ENCODE measurements at regions of chr13 and their contacts with region 1.

Region 1: GRCh38 chr13:24683838-24684599 is 3.8 kb downstream of the ATP12A start:
- H3K4me3 Mint-ChIP-seq: no peak overlapping the region
- H3K27ac Mint-ChIP-seq: no peak overlapping the region
- H3K4me1 Mint-ChIP-seq: peaks cover 10% of the 10 kb centered on the region
- H3K27me3 Mint-ChIP-seq: peaks cover 46% of the 10 kb centered on the region

Region 2: DNA sequence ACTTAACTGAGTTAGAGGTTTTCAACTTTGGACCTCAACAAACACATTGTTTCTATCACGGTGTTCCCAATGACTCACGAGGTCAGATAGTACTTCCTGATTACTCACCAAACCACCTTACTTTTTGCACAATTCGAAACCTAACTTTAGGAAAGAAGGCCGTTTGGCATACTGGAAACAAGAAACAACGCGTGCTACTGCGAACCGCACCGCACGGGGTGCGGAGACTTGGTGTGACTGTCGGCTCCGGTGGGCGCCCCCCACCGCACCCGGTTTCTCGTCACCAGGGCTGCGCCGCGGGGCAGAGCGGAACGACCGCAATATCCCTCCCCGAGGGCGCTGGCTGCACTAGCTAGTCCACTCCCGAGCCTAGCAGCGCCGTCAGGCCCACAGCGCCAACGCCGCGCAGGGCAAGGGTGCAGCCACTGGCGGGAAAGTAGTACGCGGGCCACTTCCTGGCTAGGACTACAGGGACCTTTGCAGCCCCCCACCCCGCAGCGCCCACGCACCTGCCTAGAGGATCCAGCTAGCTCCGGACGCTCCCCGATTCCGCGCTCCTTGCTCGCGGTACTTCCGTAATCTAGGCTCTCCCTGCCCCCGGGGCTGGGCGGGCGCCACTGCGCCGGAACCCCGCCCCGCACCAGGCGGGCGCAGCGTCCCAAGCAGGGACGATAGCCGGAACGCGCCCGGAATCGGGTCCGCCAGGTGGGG is 171.7 kb before region 1 on chr13 and contains the start of gene PARP4:
- intact Hi-C with region 1: loop called (anchors 5 kb)
- H3K4me3 Mint-ChIP-seq: peak within 1 kb of the TSS; percentile 92
- H3K27ac Mint-ChIP-seq: peak within 1 kb of the TSS; percentile 99
- H3K4me1 Mint-ChIP-seq: peaks cover 30% of the 10 kb centered on the region
- H3K27me3 Mint-ChIP-seq: peaks cover 4% of the 10 kb centered on the region

Region 3: DNA sequence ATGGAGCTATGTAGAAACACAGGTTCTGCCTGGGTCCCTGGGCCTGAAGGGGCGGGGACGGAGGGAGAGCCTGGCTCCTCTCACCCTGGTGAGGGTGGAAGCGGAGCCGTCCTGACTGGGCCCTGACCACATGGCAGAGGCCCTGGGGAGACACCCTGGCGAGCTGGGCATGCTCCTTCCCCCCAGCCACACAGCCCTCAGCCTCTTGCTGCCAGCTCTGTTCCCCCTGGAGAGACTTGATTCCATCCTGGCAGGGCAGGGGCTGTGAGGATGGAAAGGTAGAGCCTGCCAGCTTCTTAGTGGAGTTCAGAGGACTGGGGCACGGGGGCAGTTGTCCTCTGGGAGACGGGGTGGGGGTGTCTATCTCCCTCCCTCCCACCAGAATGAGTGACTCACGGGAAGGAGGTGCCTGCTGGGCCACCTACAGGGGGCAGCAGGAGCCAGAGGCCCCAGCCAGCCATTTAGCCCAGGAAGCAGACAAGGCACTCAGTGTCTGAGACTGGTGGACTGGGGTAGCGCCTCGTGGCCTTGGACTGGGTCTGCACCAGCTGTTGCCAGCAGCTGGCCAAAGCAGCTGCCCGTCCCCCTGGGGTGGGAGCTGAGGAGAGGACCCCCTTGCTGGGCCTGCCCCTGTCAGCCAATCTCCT is 57.1 kb after region 1 on chr13:
- intact Hi-C with region 1: no loop called
- H3K4me3 Mint-ChIP-seq: no peak overlapping the region
- H3K27ac Mint-ChIP-seq: no peak overlapping the region
- H3K4me1 Mint-ChIP-seq: no peaks in the 10 kb centered on the region
- H3K27me3 Mint-ChIP-seq: peaks cover 22% of the 10 kb centered on the region

Measured in dendritic cell treated with granulocyte-macrophage colony-stimulating factor and Interleukin-4, amounts not matched to agents 40 ng/mL and 50 ng/mL, for 4 days (primary cell).